Adrenal gland (tissue), 19 donors: ENCODE measurements at regions of chr5 and their contacts with region 1.

Region 1: DNA sequence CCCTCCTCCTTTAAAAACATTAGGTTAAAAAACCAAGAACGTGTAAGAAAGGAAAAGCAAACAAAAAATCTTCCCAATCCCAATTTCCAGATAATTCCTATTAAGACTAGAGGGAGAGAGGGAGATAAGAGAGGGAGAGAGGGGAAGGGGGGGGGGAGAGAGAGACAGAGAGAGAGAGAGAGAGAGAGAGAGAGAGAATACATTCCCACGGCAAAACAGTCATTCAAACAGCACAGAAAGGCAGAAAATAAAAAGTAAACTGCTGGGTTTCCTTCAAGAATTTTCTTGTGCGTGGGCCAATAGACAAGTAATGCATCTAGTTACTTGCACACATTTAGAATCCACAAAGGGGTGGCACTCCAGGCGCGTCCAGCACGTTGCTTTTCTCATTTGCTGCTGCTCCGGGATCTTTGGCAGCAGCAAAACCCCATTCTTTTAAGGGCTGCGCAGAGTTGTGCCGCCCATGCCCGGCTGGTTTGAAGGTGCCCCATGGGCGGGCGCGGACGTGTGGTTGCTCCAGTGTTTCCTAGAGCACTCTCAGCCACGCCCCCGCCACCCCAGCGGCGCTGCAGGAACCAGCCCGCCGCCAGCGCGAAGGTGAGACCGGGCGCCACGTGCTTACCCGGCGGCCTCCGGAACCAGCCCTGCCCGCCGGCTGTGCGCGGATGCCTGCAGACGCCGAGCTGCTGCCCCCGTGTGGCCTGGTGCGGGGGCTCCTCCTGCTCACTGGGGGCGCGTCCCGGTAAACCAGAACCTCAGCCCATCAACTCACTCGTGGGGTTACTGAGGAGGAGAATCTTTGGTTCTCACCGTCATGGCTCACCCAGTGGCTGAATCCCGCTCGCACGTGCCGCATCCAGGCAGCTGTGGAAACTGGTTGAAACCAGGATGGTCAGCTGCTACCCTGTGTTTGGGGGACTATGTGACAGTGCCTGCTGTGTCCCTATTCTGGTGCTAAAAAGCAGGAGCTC is 44.6 kb downstream of the STC2 start:
- DNase-seq: peak; percentile 58 to 81 (median 73)
- H3K4me3 ChIP-seq: peak overlapping the region in 1 of 4 donors; percentile 4
- H3K27ac ChIP-seq: no peak overlapping the region
- H3K4me1 ChIP-seq: peaks cover 4 to 7% of the 10 kb centered on the region in 2 donors
- H3K27me3 ChIP-seq: peaks cover 36% of the 10 kb centered on the region
- CTCF ChIP-seq: peak; percentile 53 to 78 (median 62)
- POLR2A ChIP-seq: no peak

Region 2: DNA sequence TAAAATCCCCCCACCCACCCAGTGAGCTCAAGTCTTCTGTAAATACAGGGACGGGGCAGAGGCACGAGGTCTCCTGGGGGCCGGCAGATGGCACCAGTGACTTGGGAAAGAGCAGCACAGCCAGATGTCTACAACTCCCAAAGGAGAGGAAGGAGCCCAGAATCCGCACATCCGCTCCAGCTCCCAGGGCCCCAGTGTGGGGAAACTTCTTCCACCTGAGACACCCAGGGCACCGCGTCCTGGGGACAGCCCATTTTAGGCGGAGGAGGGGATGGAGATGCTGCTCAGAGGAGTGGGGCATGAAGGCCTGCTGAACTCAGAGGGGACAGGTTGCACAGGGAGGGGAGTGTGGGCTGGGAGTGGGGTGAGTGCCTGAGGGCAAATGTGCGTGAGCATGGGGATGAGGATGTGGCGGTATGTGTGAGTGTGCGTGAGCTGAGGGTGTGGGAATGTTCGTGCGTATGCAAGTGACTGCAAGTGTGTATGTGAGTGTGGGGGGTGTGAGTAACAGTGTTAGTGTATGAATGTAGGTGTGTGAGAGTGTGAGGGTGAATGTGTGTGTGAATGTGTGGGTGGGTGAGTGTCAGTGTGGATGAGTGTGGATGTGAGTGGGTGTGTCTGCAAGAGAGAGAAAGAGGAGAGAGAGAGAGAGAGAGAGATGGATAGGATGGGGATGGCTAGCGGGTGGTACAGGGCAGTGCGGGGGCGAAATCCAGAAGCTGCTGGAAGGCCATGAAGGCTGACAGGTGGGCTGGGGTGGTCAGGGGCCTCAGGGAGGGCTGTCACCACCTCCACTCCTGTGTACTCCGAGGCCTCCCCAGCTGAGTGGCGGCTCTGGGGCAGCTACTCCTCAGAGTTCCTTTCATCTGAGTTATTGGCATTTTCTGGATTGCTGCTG is 576.1 kb before region 1 on chr5:
- intact Hi-C with region 1: loop called (anchors 5 kb)
- DNase-seq: peak in 6 of 7 donors; percentile 65 to 81 (median 70)
- H3K4me3 ChIP-seq: no peak overlapping the region
- H3K27ac ChIP-seq: no peak overlapping the region
- H3K4me1 ChIP-seq: no peaks in the 10 kb centered on the region
- H3K27me3 ChIP-seq: no peaks in the 10 kb centered on the region
- CTCF ChIP-seq: peak; percentile 14 to 62 (median 41)
- POLR2A ChIP-seq: no peak